ENCODE measurements at regions of chr5 and their contacts with region 1.

Region 1: GRCh38 chr5:83473346-83474163 is 2.0 kb downstream of the VCAN start:
- DNase-seq: peak; percentile 75
- ATAC-seq: peak; percentile 71
- H3K4me3 Mint-ChIP-seq: peak overlapping the region; percentile 73
- H3K27ac Mint-ChIP-seq: peak overlapping the region; percentile 30
- H3K4me1 Mint-ChIP-seq: peaks cover 31% of the 10 kb centered on the region
- H3K27me3 Mint-ChIP-seq: peaks cover 72% of the 10 kb centered on the region
- CTCF ChIP-seq: peak; percentile 68

Region 2: GRCh38 chr5:83076742-83077661 is 396.6 kb before region 1 on chr5 and contains the starts of genes TMEM167A and XRCC4:
- CTCF ChIA-PET with region 1: no interaction called
- POLR2A ChIA-PET with region 1: no interaction called
- intact Hi-C with region 1: loop called (anchors 10 kb)
- DNase-seq: peak; percentile 96
- ATAC-seq: peak; percentile 99
- H3K4me3 Mint-ChIP-seq: peak within 1 kb of the TSS; percentile 97
- H3K27ac Mint-ChIP-seq: peak within 1 kb of the TSS; percentile 99
- H3K4me1 Mint-ChIP-seq: peaks cover 47% of the 10 kb centered on the region
- H3K27me3 Mint-ChIP-seq: no peaks in the 10 kb centered on the region
- CTCF ChIP-seq: no peak
- total RNA-seq, gene TMEM167A: 70.4 to 78.6 TPM
- total RNA-seq, gene XRCC4: 12.8 to 12.9 TPM

Measured in activated CD8-positive, alpha-beta T cell treated with anti-CD3 and anti-CD28 coated beads for 36 hours (primary cell).